ENCODE measurements at regions of chr2 and their contacts with region 1.

Region 1: GRCh38 chr2:163191372-163191771 is 352.8 kb upstream of the KCNH7 start:
- DNase-seq: peak; percentile 21
- ATAC-seq: peak; percentile 42; the same call in 1 of the 2 replicates
- H3K4me3 ChIP-seq: no peak overlapping the region
- H3K27ac ChIP-seq: no peak overlapping the region
- H3K4me1 ChIP-seq: no peaks in the 10 kb centered on the region
- H3K27me3 ChIP-seq: no peaks in the 10 kb centered on the region
- CTCF ChIP-seq: peak; percentile 42 to 69 (median 58); a peak in 5 of 6 replicates
- POLR2A ChIP-seq: no peak
- RAD21 ChIP-seq: peak; percentile 69

Region 2: DNA sequence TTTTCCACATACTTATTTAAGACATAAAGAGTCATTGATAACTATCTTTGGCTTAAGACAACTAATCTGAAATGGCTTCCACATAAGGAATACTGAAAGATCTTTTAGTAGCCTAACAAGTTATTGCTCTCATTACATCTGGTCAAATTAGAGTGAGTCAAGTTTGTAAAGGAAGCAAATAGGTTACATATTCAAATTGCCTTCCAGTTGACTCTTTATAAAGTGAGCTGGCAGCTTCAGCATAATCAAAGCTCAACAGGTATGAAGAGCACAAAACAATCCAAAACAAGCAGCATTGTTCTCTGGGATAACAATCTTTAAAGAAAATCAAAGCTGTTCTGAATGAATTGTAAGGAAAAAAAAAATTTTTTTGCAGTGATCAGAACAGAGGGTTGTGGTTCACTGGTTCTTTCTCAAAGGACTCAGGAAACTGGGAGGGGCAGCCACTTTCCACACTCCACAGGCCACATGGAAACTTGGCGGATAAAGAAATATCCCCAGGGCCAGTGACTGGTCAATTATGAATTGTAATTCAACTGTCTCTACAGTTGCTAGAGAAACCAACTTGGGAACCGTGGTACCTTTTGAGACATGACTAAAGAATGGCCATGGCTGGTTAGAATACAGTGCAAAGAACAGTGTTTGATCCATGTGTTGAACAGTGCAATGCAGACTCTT is 16.5 kb after region 1 on chr2:
- CTCF ChIA-PET with region 1: no interaction called
- POLR2A ChIA-PET with region 1: no interaction called
- RAD21 ChIA-PET with region 1: no interaction called
- intact Hi-C with region 1: no loop called
- DNase-seq: no peak
- ATAC-seq: no peak
- H3K4me3 ChIP-seq: no peak overlapping the region
- H3K27ac ChIP-seq: no peak overlapping the region
- H3K4me1 ChIP-seq: no peaks in the 10 kb centered on the region
- H3K27me3 ChIP-seq: peaks cover 13% of the 10 kb centered on the region; the same call in 1 of the 2 replicates
- CTCF ChIP-seq: no peak
- POLR2A ChIP-seq: no peak
- RAD21 ChIP-seq: no peak

Region 3: DNA sequence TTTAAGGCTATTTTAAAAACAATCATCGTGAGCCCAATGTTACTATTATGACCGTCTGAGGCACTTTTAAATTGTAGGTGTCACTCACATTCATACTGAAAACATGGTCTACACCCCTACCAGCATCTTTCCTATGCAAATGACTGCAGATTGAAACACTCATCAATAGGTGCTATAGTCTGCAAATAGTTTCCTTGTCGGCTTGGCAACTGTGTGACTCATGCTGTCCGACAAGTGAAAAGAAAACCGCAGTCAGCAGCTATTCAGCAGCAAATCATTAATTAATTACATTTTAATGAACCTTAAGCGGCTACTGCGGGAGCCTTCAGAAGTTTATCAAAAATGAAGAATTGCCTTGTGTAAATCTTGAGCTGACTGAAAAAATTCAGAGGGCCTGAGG is 410.0 kb after region 1 on chr2:
- CTCF ChIA-PET with region 1: no interaction called
- POLR2A ChIA-PET with region 1: no interaction called
- RAD21 ChIA-PET with region 1: no interaction called
- intact Hi-C with region 1: loop called (anchors 5 kb)
- DNase-seq: no peak
- ATAC-seq: no peak
- H3K4me3 ChIP-seq: no peak overlapping the region
- H3K27ac ChIP-seq: no peak overlapping the region
- H3K4me1 ChIP-seq: no peaks in the 10 kb centered on the region
- H3K27me3 ChIP-seq: peaks cover 55% of the 10 kb centered on the region
- CTCF ChIP-seq: no peak
- POLR2A ChIP-seq: no peak
- RAD21 ChIP-seq: no peak

Region 4: GRCh38 chr2:163878531-163879117 is 687.3 kb after region 1 on chr2:
- CTCF ChIA-PET with region 1: interaction called, 3 read pairs
- POLR2A ChIA-PET with region 1: no interaction called
- RAD21 ChIA-PET with region 1: no interaction called
- intact Hi-C with region 1: loop called (anchors 5 kb)
- DNase-seq: peak; percentile 12
- ATAC-seq: peak; percentile 81
- H3K4me3 ChIP-seq: no peak overlapping the region
- H3K27ac ChIP-seq: no peak overlapping the region
- H3K4me1 ChIP-seq: no peaks in the 10 kb centered on the region
- H3K27me3 ChIP-seq: 0 out of 2 replicates have a peak, but pooled peaks cover 8% of the 10 kb centered on the region
- CTCF ChIP-seq: peak; percentile 44 to 91 (median 78); a peak in 5 of 6 replicates
- POLR2A ChIP-seq: no peak
- RAD21 ChIP-seq: peak; percentile 60

Region 5: GRCh38 chr2:164061129-164061746 is 869.9 kb after region 1 on chr2:
- CTCF ChIA-PET with region 1: interaction called, 7 read pairs
- POLR2A ChIA-PET with region 1: no interaction called
- RAD21 ChIA-PET with region 1: no interaction called
- intact Hi-C with region 1: loop called (anchors 5 kb)
- DNase-seq: peak; percentile 22
- ATAC-seq: peak; percentile 53; the same call in 1 of the 2 replicates
- H3K4me3 ChIP-seq: no peak overlapping the region
- H3K27ac ChIP-seq: no peak overlapping the region
- H3K4me1 ChIP-seq: no peaks in the 10 kb centered on the region
- H3K27me3 ChIP-seq: peaks cover 3% of the 10 kb centered on the region; the same call in 1 of the 2 replicates
- CTCF ChIP-seq: peak; percentile 40 to 83 (median 67); a peak in 5 of 6 replicates
- POLR2A ChIP-seq: no peak
- RAD21 ChIP-seq: peak; percentile 65

Region 6: GRCh38 chr2:164430166-164430783 is 1238.9 kb after region 1 on chr2:
- CTCF ChIA-PET with region 1: interaction called, 5 read pairs
- POLR2A ChIA-PET with region 1: no interaction called
- RAD21 ChIA-PET with region 1: no interaction called
- intact Hi-C with region 1: loop called (anchors 2 kb)
- DNase-seq: peak; percentile 23
- ATAC-seq: peak; percentile 81
- H3K4me3 ChIP-seq: no peak overlapping the region
- H3K27ac ChIP-seq: no peak overlapping the region
- H3K4me1 ChIP-seq: no peaks in the 10 kb centered on the region
- H3K27me3 ChIP-seq: peaks cover 38% of the 10 kb centered on the region
- CTCF ChIP-seq: peak; percentile 38 to 71 (median 70); a peak in 5 of 6 replicates
- POLR2A ChIP-seq: no peak
- RAD21 ChIP-seq: peak; percentile 61

Measured in HCT116 (cell line).